Motor neuron (in vitro differentiated cells): ENCODE measurements at regions of chr3 and their contacts with region 1.

Region 1: GRCh38 chr3:128794770-128795649 is 69.0 kb downstream of the RAB7A start:
- ATAC-seq: peak; percentile 86 to 100 (median 96)
- H3K4me3 ChIP-seq: no peak overlapping the region
- H3K27ac ChIP-seq: no peak overlapping the region
- H3K4me1 ChIP-seq: no peaks in the 10 kb centered on the region

Region 2: DNA sequence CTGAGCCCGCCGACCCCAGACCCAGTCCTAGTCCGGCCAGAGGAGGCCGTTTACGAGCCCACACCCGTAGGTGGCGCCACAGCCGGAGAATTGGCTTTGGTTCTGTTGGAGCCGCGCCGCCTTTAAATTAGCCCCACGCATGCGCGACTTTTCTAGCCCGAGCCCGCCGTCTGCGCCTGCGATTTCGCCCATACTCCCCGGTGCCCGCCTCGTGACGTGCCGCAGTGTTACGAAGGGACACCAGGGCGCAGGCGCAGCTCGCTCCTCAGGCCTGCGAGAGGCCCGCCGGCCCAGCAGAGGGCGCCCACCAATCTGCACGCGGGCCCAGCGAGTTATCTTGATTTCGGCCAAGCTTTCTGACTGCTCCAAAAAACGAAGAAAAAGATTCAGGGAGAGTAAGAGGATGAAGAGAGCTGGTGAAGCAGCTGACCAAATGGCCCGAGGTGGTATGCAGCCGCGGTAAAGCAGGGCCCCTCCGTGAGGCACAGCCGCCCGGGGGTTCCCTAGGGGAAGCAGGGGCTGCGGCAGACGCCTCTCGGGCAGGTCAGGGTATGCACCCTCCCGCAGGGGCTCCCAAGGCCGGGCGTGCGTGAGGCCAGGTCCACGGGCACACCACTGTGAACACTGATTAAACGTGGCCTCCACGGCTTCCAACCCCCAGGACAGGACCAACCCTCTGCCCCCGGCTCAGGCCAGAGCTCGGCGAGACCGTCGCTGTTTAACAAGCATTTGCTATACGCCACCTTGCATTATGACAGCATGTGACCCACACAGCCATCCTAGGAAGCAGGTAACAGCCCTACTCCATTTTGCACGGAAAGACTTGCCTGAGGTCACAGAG is 177.2 kb before region 1 on chr3:
- in situ Hi-C with region 1: no loop called
- ATAC-seq: peak; percentile 87 to 96 (median 93)
- H3K4me3 ChIP-seq: peak overlapping the region; percentile 58 to 92 (median 67)
- H3K27ac ChIP-seq: peak overlapping the region; percentile 69 to 91
- H3K4me1 ChIP-seq: peaks cover 5 to 12% of the 10 kb centered on the region in 2 donors

Region 3: GRCh38 chr3:128680602-128681368 is 114.2 kb before region 1 on chr3:
- in situ Hi-C with region 1: loop called in 1 of 9 experiments (anchors 25 kb)
- ATAC-seq: peak; percentile 92 to 97 (median 94)
- H3K4me3 ChIP-seq: peak overlapping the region; percentile 40 to 64 (median 49)
- H3K27ac ChIP-seq: peak overlapping the region; percentile 98 to 99
- H3K4me1 ChIP-seq: peaks cover 4 to 9% of the 10 kb centered on the region in 2 donors